ENCODE measurements at regions of chr9 and their contacts with region 1.

Region 1: DNA sequence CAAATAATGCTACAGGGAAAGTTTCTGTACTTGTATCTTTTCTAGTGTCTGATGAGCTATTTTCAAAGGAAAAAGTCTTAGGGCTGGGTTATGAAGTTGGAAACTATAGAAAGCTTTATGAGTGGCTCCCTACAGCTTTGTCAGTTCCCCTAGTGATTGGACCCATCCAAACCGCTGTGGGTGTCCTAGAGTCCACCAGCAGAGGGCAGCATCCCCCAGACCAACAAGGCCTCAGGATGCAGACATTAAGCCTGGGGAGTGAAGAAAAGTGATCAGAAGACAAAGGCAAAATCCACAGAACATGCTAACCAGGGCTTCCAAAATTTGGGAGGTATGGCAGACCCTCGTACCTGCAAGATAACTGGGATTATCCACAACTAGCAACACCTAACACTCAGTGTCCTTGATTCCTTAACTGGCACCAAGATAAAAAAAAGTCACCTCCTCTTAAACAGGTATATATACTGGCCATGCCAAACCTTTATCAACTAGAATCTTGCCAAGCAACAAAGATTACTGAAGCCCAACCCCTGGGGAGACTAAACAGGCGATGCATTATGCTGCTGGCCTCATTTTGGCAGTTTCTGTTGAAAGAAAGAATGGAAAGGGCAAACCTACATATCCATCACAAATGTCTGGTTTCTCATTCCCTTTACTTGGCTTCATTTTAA is 110.4 kb upstream of the NR5A1 start:
- DNase-seq: peak; percentile 77 to 86
- H3K4me3 ChIP-seq: no peak overlapping the region
- H3K4me3 Mint-ChIP-seq: no peak overlapping the region
- H3K27ac Mint-ChIP-seq: no peak overlapping the region
- H3K4me1 ChIP-seq: no peaks in the 10 kb centered on the region
- H3K4me1 Mint-ChIP-seq: peaks cover 6% of the 10 kb centered on the region
- H3K27me3 ChIP-seq: no peaks in the 10 kb centered on the region
- H3K27me3 Mint-ChIP-seq: no peaks in the 10 kb centered on the region
- CTCF ChIP-seq: peak; percentile 85 to 92

Region 2: DNA sequence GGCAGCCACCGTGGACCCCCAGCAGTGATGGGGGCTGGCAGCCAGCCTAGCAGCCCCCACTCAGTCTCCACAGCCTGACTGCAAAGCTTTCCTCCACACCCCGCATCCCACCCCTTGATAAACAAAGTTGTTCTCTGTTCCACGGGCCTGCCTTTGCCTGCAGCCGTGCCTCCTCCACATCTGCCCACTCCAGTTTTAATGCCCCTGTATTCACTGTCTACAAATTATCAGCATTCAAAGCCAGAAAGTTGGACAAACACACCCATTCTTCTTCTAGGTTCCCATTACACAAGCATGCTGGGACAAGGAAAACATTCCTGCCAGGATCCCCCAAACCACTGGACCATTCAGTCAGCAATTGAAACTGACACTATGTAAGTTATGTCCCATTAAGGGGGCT is 87.4 kb before region 1 on chr9:
- CTCF ChIA-PET with region 1: no interaction called
- POLR2A ChIA-PET with region 1: no interaction called
- intact Hi-C with region 1: no loop called
- DNase-seq: no peak
- H3K4me3 ChIP-seq: no peak overlapping the region
- H3K4me3 Mint-ChIP-seq: no peak overlapping the region
- H3K27ac Mint-ChIP-seq: no peak overlapping the region
- H3K4me1 ChIP-seq: no peaks in the 10 kb centered on the region
- H3K4me1 Mint-ChIP-seq: no peaks in the 10 kb centered on the region
- H3K27me3 ChIP-seq: no peaks in the 10 kb centered on the region
- H3K27me3 Mint-ChIP-seq: no peaks in the 10 kb centered on the region
- CTCF ChIP-seq: no peak

Region 3: GRCh38 chr9:124551472-124552272 is 65.9 kb before region 1 on chr9:
- CTCF ChIA-PET with region 1: interaction called, 27 read pairs
- POLR2A ChIA-PET with region 1: interaction called, 4 read pairs
- intact Hi-C with region 1: loop called (anchors 1 kb)
- DNase-seq: peak; percentile 70 to 77
- H3K4me3 ChIP-seq: no peak overlapping the region
- H3K4me3 Mint-ChIP-seq: no peak overlapping the region
- H3K27ac Mint-ChIP-seq: no peak overlapping the region
- H3K4me1 ChIP-seq: peaks cover 9% of the 10 kb centered on the region; the same call in 1 of the 2 replicates
- H3K4me1 Mint-ChIP-seq: no peaks in the 10 kb centered on the region
- H3K27me3 ChIP-seq: no peaks in the 10 kb centered on the region
- H3K27me3 Mint-ChIP-seq: no peaks in the 10 kb centered on the region
- CTCF ChIP-seq: peak; percentile 69 to 78

Region 4: DNA sequence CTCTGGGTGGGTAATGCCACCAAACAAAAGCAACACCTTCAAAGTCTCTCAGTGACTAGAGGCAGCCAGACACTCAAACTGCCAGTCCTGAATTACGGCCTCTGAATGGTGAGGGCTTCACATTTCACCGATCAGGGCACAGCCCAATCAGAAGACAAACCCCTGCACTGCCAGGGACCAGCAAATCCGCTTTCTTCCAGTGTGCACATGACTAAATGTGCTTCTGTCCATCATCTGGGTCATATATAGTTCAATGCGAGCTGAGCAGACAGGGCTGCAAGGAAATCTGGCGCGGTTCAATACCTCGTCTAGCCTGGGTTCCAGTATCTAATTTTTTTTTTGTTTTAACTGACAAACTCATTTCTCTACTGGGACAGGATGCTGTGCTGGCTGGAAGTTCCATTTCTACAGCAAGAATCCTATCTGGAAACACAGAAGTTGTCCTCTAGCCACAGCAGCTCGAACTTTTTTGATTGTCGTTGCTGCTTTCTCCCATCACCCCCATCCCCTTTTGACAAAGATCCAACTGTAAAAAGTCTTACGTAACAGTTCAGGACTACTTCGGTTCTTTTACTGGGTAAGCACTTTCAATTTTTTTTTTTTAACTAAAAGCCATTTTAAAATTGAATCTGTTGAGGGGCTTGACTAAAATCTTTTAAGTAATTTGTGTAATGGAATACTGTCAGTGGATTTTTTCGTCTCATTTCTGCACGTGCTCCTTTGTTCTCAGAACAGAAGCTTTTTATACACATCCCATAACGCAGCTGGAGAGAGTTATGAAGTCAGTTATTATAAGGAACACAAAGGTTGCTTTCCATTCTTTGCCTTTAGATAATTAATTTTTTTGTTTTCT is 40.8 kb after region 1 on chr9:
- CTCF ChIA-PET with region 1: interaction called, 9 read pairs
- POLR2A ChIA-PET with region 1: no interaction called
- intact Hi-C with region 1: loop called (anchors 1 kb)
- DNase-seq: peak; percentile 76 to 85
- H3K4me3 ChIP-seq: peak overlapping the region; percentile 49
- H3K4me3 Mint-ChIP-seq: peak overlapping the region; percentile 98
- H3K27ac Mint-ChIP-seq: peak overlapping the region; percentile 100
- H3K4me1 ChIP-seq: peaks cover 37% of the 10 kb centered on the region
- H3K4me1 Mint-ChIP-seq: peaks cover 7% of the 10 kb centered on the region
- H3K27me3 ChIP-seq: no peaks in the 10 kb centered on the region
- H3K27me3 Mint-ChIP-seq: no peaks in the 10 kb centered on the region
- CTCF ChIP-seq: no peak

Region 5: DNA sequence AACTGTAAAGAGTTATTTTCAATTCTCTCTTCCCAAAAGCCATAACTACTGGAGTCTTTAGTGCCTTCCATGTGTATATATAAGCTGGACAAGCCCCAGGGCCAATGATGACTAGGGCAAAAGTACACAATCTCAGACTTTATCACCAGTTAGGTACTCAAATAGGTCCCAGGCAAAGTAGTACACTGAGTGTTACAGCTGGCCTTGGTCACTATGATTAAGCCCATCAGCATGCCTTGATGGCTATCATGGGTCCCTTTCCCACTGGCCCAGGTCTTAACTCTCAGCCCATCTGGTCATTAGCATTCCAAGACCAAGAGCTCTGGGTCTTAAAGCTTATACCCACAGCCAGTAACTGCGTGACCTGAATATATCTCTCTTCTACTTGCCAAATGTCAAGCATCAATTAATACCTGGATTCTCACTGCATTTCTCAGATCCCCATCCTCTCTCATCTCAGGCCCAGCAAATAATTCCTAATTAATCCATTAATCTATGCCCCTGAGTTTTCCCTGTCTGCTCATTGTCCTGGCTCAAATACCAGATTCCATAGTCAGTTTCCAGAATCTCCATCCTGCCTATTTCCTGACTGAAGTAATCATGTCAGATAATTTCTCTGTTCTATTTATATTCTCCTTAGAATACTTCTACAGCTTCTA is 91.2 kb after region 1 on chr9:
- CTCF ChIA-PET with region 1: interaction called, 38 read pairs
- POLR2A ChIA-PET with region 1: interaction called, 3 read pairs
- intact Hi-C with region 1: loop called (anchors 1 kb)
- DNase-seq: peak in 1 of 2 experiments; percentile 48
- H3K4me3 ChIP-seq: no peak overlapping the region
- H3K4me3 Mint-ChIP-seq: no peak overlapping the region
- H3K27ac Mint-ChIP-seq: no peak overlapping the region
- H3K4me1 ChIP-seq: peaks cover 14% of the 10 kb centered on the region; the same call in 1 of the 2 replicates
- H3K4me1 Mint-ChIP-seq: peaks cover 41% of the 10 kb centered on the region
- H3K27me3 ChIP-seq: no peaks in the 10 kb centered on the region
- H3K27me3 Mint-ChIP-seq: no peaks in the 10 kb centered on the region
- CTCF ChIP-seq: no peak

Region 6: DNA sequence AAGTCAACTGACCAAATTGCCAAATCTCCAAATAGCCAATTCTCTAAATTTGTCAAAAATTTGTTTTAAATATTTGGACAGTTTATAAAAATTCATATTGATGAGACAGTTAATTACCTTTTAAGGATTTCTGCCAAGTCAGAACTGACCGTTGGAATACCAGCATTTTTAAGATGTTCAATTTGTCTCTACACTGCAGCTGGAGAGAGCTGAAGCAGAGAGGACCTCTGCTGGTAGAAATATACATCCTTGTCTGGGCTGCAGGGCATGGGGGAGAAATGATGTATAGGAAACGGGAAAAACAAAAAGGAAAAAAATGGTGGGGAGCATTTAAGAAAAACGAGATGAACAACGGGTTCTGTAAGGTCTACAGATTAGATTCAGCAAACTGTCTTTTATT is 136.7 kb after region 1 on chr9:
- CTCF ChIA-PET with region 1: interaction called, 3 read pairs
- POLR2A ChIA-PET with region 1: no interaction called
- intact Hi-C with region 1: loop called (anchors 1 kb)
- DNase-seq: peak in 1 of 2 experiments; percentile 38
- H3K4me3 ChIP-seq: no peak overlapping the region
- H3K4me3 Mint-ChIP-seq: no peak overlapping the region
- H3K27ac Mint-ChIP-seq: no peak overlapping the region
- H3K4me1 ChIP-seq: peaks cover 21% of the 10 kb centered on the region; the same call in 1 of the 2 replicates
- H3K4me1 Mint-ChIP-seq: peaks cover 41% of the 10 kb centered on the region
- H3K27me3 ChIP-seq: no peaks in the 10 kb centered on the region
- H3K27me3 Mint-ChIP-seq: no peaks in the 10 kb centered on the region
- CTCF ChIP-seq: peak; percentile 49 to 51

Region 7: DNA sequence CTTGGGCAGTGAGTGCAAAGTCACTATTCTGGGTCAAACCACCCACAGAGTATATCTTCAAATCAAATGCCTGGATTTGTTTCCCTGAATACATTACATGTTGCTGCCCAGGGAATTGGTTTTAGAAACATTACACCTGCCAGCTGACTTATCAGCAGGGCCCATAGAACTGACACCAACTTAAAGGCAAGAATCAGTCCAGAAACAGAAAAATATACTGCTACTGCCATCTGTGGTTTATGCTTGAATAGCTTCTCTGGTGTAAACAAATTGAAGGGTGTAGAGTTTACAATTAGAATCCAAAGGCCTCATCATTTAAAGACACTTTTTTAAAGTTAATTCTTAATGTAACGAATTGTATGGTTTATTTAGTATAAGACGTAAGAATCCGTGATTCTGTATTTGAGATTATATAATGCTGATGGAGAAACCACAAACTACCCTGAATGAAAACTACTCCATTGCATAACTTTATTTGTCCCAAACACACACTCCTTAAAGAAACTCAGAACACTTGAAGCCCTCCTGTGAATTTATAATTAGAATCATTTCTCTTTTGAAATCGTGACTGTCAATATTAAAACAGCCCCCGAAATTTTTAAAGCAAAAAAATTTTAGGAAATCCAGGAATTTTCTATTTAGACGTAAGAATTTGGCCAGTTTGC is 147.3 kb after region 1 on chr9:
- CTCF ChIA-PET with region 1: interaction called, 10 read pairs
- POLR2A ChIA-PET with region 1: no interaction called
- intact Hi-C with region 1: no loop called
- DNase-seq: no peak
- H3K4me3 ChIP-seq: no peak overlapping the region
- H3K4me3 Mint-ChIP-seq: no peak overlapping the region
- H3K27ac Mint-ChIP-seq: no peak overlapping the region
- H3K4me1 ChIP-seq: no peaks in the 10 kb centered on the region
- H3K4me1 Mint-ChIP-seq: peaks cover 9% of the 10 kb centered on the region
- H3K27me3 ChIP-seq: no peaks in the 10 kb centered on the region
- H3K27me3 Mint-ChIP-seq: no peaks in the 10 kb centered on the region
- CTCF ChIP-seq: peak in 1 of 2 experiments; percentile 36